ENCODE measurements at regions of chr1 and their contacts with region 1.

Region 1: DNA sequence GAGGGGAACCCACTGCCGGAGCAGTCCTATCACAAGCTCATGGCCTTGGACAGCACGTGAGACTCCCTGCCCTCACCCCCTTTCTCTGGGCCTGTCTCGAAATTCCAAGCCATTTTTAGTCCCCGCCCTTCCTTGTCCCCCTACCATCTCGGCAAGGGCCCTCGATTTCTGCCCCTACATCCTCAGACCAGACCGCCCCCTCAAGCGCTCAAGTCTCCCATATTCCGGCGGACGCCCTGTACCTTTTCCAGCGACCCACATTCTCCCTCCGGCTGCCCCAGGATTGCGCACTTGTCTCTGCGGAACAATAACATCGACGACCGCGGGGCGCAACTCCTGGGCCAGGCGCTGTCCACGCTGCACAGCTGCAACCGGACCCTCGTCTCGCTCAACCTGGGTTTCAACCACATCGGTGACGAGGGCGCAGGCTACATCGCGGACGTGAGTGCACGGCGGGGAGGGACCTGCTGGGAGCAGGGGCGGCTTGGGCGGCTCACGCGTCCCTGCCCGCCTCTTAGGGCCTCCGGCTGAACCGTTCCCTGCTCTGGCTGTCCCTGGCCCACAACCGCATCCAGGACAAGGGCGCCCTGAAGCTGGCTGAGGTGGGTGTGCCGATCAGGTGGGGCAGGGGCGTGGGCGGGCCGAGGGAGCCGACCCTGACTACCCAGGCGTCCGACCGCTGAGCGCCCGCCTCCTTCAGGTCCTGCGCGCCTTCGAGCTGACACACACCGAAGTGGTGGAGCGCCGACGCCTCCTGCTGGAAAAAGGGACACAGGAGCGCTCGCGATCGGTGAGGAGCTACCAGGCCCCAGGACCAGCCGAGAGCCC is 7.0 kb downstream of the LRRC71 start:
- DNase-seq: peak; percentile 35 to 70 (median 43)
- H3K4me3 ChIP-seq: no peak overlapping the region
- H3K4me3 Mint-ChIP-seq: peak overlapping the region in 4 of 7 donors; percentile 15 to 50 (median 29)
- H3K27ac ChIP-seq: no peak overlapping the region
- H3K27ac Mint-ChIP-seq: peak overlapping the region in 1 of 8 donors; percentile 56
- H3K4me1 ChIP-seq: peaks cover 7% of the 10 kb centered on the region
- H3K4me1 Mint-ChIP-seq: peaks cover 12 to 38% (median 13%) of the 10 kb centered on the region in 3 donors
- H3K27me3 ChIP-seq: peaks cover 31% of the 10 kb centered on the region
- H3K27me3 Mint-ChIP-seq: peaks cover 71 to 90% of the 10 kb centered on the region in 2 donors

Region 2: GRCh38 chr1:157119448-157119847 is 192.0 kb after region 1 on chr1:
- CTCF ChIA-PET with region 1: no interaction called
- POLR2A ChIA-PET with region 1: interaction called, 13 read pairs
- DNase-seq: no peak
- H3K4me3 ChIP-seq: no peak overlapping the region
- H3K4me3 Mint-ChIP-seq: no peak overlapping the region
- H3K27ac ChIP-seq: no peak overlapping the region
- H3K27ac Mint-ChIP-seq: peak overlapping the region in 4 of 8 donors; percentile 29 to 90 (median 76)
- H3K4me1 ChIP-seq: no peaks in the 10 kb centered on the region
- H3K4me1 Mint-ChIP-seq: peaks cover 19 to 26% (median 25%) of the 10 kb centered on the region in 3 donors
- H3K27me3 ChIP-seq: no peaks in the 10 kb centered on the region
- H3K27me3 Mint-ChIP-seq: no peaks in the 10 kb centered on the region